Kidney (tissue), 22 donors: ENCODE measurements at regions of chr9 and their contacts with region 1.

Region 1: DNA sequence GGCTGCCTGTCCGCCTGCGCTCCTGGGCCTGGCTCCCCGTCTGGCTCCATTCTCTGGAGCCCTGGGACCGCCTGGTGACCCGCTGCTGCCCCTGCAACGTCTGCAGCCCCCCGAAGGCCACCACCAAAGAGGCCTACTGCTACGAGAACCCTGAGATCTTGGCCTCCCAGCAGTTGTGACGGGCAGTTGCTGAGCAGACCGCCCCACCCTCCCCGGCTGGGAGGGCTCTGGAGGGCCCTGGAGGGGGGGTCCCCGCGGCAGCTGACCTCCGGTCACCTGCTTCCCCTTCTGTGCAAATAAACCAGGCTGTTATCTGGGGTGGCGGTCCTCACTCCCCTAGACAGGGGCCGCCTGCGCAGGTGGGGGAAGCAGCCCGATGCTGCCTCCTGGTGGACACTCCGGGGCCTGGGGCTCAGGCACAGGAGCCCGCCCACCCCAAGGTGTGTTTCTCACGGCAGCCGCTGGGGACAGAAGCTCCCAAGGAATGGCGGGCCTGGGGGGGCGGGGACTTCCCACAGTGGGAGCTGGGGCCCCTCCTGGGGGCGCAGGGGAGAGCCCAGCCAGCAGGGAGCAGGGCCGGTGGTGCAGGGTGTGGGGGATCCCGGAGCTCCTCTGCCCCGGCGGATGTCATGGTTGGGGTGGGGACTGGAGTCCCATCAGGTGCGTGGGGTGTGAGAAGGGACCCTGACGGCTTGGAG is 4.7 kb upstream of the TUBB4B start:
- DNase-seq: peak; percentile 92 to 95 (median 93)
- H3K4me3 ChIP-seq: no peak overlapping the region
- H3K27ac ChIP-seq: peak overlapping the region in 1 of 2 donors; percentile 7
- H3K4me1 ChIP-seq: peaks cover 0 to 8% (median 4%) of the 10 kb centered on the region in 3 donors
- H3K27me3 ChIP-seq: no peaks in the 10 kb centered on the region
- CTCF ChIP-seq: peak; percentile 99

Region 2: GRCh38 chr9:137114610-137115391 is 121.6 kb before region 1 on chr9 and contains the start of gene DPP7:
- intact Hi-C with region 1: loop called (anchors 10 kb)
- DNase-seq: peak in 4 of 5 donors; percentile 16 to 93 (median 45)
- H3K4me3 ChIP-seq: peak within 1 kb of the TSS in 1 of 3 donors; percentile 53
- H3K27ac ChIP-seq: no peak within 1 kb of the TSS
- H3K4me1 ChIP-seq: peaks cover 0 to 4% (median 0%) of the 10 kb centered on the region in 3 donors
- H3K27me3 ChIP-seq: peaks cover 6% of the 10 kb centered on the region
- CTCF ChIP-seq: no peak
- total RNA-seq, gene DPP7: 164 TPM